Activated CD4-positive, alpha-beta T cell treated with anti-CD3 and anti-CD28 coated beads for 36 hours (primary cell): ENCODE measurements at regions of chr4 and their contacts with region 1.

Region 1: GRCh38 chr4:138680989-138681604 is 334.5 kb upstream of the NOCT start:
- DNase-seq: peak; percentile 87
- ATAC-seq: peak; percentile 65
- H3K4me3 Mint-ChIP-seq: no peak overlapping the region
- H3K27ac Mint-ChIP-seq: no peak overlapping the region
- H3K4me1 Mint-ChIP-seq: no peaks in the 10 kb centered on the region
- H3K27me3 Mint-ChIP-seq: peaks cover 13% of the 10 kb centered on the region

Region 2: DNA sequence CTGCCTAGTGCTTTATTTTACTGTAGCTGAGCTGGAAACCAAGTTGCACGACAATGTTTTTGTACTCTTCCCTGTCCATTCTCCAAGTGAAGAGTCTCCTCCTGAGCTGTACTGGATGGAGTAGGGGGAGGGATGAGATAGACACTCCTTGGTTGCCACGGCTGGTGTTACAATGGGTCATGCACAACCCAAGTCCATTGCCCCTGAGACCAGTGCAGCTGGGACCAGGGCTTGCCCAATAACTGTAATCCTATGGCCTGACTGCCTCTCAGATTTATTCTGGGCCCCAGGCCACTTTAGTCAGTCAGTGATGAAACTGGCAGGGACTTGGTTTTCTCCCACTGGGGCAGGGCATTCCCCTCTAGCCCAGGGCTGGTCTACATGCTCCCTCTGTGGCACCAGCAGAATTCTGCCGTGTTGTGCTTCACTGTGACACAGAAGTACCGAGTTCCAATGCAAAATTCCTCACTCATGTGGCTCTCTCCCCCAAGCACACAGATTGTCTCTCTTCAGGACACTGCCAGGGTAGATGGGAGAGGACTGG is 945.5 kb before region 1 on chr4:
- CTCF ChIA-PET with region 1: no interaction called
- POLR2A ChIA-PET with region 1: no interaction called
- intact Hi-C with region 1: loop called in 1 of 2 experiments (anchors 1 kb)
- DNase-seq: no peak
- ATAC-seq: no peak
- H3K4me3 Mint-ChIP-seq: no peak overlapping the region
- H3K27ac Mint-ChIP-seq: no peak overlapping the region
- H3K4me1 Mint-ChIP-seq: no peaks in the 10 kb centered on the region
- H3K27me3 Mint-ChIP-seq: no peaks in the 10 kb centered on the region

Region 3: GRCh38 chr4:138035781-138036258 is 645.3 kb before region 1 on chr4:
- CTCF ChIA-PET with region 1: interaction called, 7 read pairs
- POLR2A ChIA-PET with region 1: no interaction called
- intact Hi-C with region 1: loop called (anchors 1 to 2 kb)
- DNase-seq: peak; percentile 5
- ATAC-seq: peak; percentile 47
- H3K4me3 Mint-ChIP-seq: no peak overlapping the region
- H3K27ac Mint-ChIP-seq: no peak overlapping the region
- H3K4me1 Mint-ChIP-seq: no peaks in the 10 kb centered on the region
- H3K27me3 Mint-ChIP-seq: no peaks in the 10 kb centered on the region

Region 4: DNA sequence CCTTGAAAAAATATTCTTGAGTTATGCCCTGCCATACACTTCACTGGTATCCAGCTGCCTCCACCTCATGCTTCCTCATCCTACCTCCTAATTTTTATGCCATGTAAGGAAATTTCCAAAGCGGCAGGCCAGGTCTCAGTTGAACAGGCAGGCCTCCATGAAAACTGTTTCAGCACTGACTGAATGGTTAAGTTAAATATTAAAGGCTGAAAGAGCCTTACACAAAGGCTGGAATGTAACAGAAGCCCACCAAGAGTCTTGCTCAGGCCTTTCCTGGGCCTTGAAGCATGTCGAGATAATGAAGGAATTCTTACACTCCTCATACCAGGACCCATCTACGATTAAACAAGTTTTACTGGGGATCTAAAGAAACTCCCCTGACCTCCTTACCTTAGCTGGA is 25.1 kb before region 1 on chr4:
- CTCF ChIA-PET with region 1: interaction called, 10 read pairs
- POLR2A ChIA-PET with region 1: no interaction called
- intact Hi-C with region 1: no loop called
- DNase-seq: no peak
- ATAC-seq: no peak
- H3K4me3 Mint-ChIP-seq: no peak overlapping the region
- H3K27ac Mint-ChIP-seq: no peak overlapping the region
- H3K4me1 Mint-ChIP-seq: no peaks in the 10 kb centered on the region
- H3K27me3 Mint-ChIP-seq: peaks cover 9% of the 10 kb centered on the region

Region 5: GRCh38 chr4:138707746-138708677 is 26.9 kb after region 1 on chr4:
- CTCF ChIA-PET with region 1: no interaction called
- POLR2A ChIA-PET with region 1: no interaction called
- intact Hi-C with region 1: no loop called
- DNase-seq: no peak
- ATAC-seq: no peak
- H3K4me3 Mint-ChIP-seq: no peak overlapping the region
- H3K27ac Mint-ChIP-seq: no peak overlapping the region
- H3K4me1 Mint-ChIP-seq: no peaks in the 10 kb centered on the region
- H3K27me3 Mint-ChIP-seq: peaks cover 17% of the 10 kb centered on the region

Region 6: GRCh38 chr4:138919094-138919936 is 238.2 kb after region 1 on chr4:
- CTCF ChIA-PET with region 1: no interaction called
- POLR2A ChIA-PET with region 1: no interaction called
- intact Hi-C with region 1: loop called (anchors 2 to 5 kb)
- DNase-seq: peak; percentile 74
- ATAC-seq: peak; percentile 73
- H3K4me3 Mint-ChIP-seq: no peak overlapping the region
- H3K27ac Mint-ChIP-seq: no peak overlapping the region
- H3K4me1 Mint-ChIP-seq: peaks cover 2% of the 10 kb centered on the region
- H3K27me3 Mint-ChIP-seq: peaks cover 12% of the 10 kb centered on the region